Vagina (tissue), 2 donors: ENCODE measurements at regions of chr2 and their contacts with region 1.

Region 1: GRCh38 chr2:175687465-175687864 is 314.6 kb downstream of the LNPK start:
- DNase-seq: no peak
- H3K4me3 ChIP-seq: no peak overlapping the region
- H3K27ac ChIP-seq: no peak overlapping the region
- H3K4me1 ChIP-seq: no peaks in the 10 kb centered on the region
- H3K27me3 ChIP-seq: no peaks in the 10 kb centered on the region
- CTCF ChIP-seq: no peak
- POLR2A ChIP-seq: no peak

Region 2: GRCh38 chr2:176088048-176088936 is 400.8 kb after region 1 on chr2:
- intact Hi-C with region 1: loop called (anchors 5 kb)
- DNase-seq: no peak
- H3K4me3 ChIP-seq: peak overlapping the region; percentile 46 to 48
- H3K27ac ChIP-seq: peak overlapping the region; percentile 91
- H3K4me1 ChIP-seq: peaks cover 48% of the 10 kb centered on the region
- H3K27me3 ChIP-seq: no peaks in the 10 kb centered on the region
- CTCF ChIP-seq: peak; percentile 7 to 58 (median 57)
- POLR2A ChIP-seq: no peak